HCT116 (cell line): ENCODE measurements at regions of chr17 and their contacts with region 1.

Region 1: GRCh38 chr17:63406689-63407330 is 39.3 kb downstream of the CYB561 start:
- DNase-seq: peak; percentile 93
- ATAC-seq: peak; percentile 96
- H3K4me3 ChIP-seq: no peak overlapping the region
- H3K27ac ChIP-seq: no peak overlapping the region
- H3K4me1 ChIP-seq: no peaks in the 10 kb centered on the region; a peak in 1 of 4 replicates
- H3K27me3 ChIP-seq: no peaks in the 10 kb centered on the region
- CTCF ChIP-seq: peak; percentile 86 to 99 (median 95)
- POLR2A ChIP-seq: no peak
- RAD21 ChIP-seq: peak; percentile 98

Region 2: GRCh38 chr17:62562656-62563055 is 844.2 kb before region 1 on chr17:
- CTCF ChIA-PET with region 1: no interaction called
- POLR2A ChIA-PET with region 1: no interaction called
- RAD21 ChIA-PET with region 1: no interaction called
- intact Hi-C with region 1: loop called (anchors 10 kb)
- DNase-seq: peak; percentile 73
- ATAC-seq: peak; percentile 80
- H3K4me3 ChIP-seq: peak overlapping the region in 1 of 2 experiments; percentile 1; a peak in 1 of 4 replicates
- H3K27ac ChIP-seq: peak overlapping the region; percentile 10; the same call in 1 of the 2 replicates
- H3K4me1 ChIP-seq: peaks cover 23 to 41% of the 10 kb centered on the region in 2 experiments
- H3K27me3 ChIP-seq: no peaks in the 10 kb centered on the region
- CTCF ChIP-seq: no peak
- POLR2A ChIP-seq: no peak
- RAD21 ChIP-seq: no peak

Region 3: GRCh38 chr17:62703775-62704378 is 702.9 kb before region 1 on chr17:
- CTCF ChIA-PET with region 1: interaction called, 13 read pairs
- POLR2A ChIA-PET with region 1: no interaction called
- RAD21 ChIA-PET with region 1: interaction called in 1 of 2 experiments, 3 read pairs
- intact Hi-C with region 1: loop called (anchors 1 kb)
- DNase-seq: no peak
- ATAC-seq: peak; percentile 93
- H3K4me3 ChIP-seq: peak overlapping the region; percentile 48 to 63
- H3K27ac ChIP-seq: peak overlapping the region; percentile 39; the same call in 1 of the 2 replicates
- H3K4me1 ChIP-seq: peaks cover 18 to 32% of the 10 kb centered on the region in 2 experiments
- H3K27me3 ChIP-seq: no peaks in the 10 kb centered on the region
- CTCF ChIP-seq: peak; percentile 76 to 94 (median 91)
- POLR2A ChIP-seq: no peak
- RAD21 ChIP-seq: peak; percentile 97

Region 4: DNA sequence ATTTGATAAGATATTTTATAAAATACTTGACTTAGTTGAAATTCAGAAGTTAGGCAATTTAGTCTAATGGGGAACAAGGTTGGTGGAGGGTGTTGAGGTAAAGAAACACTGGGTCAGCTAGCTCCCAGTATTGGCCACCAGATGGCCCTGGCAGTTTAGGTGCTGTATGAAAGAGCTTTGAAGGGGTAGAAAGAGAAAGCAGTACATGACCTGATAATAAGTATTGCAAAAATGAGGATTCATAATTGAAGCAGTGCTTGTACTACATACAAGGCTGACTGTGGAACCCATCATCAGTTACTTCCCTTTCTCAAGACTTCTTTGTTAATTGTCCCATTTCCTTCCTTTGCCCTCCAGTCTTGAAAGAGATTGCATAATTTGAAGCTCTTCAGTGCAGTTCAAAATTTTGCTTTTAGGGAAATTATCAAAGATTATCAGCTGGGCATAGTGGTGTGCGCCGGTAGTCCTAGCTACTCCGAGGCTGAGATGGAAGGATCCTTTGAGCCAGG is 411.4 kb before region 1 on chr17:
- CTCF ChIA-PET with region 1: interaction called, 48 read pairs
- POLR2A ChIA-PET with region 1: no interaction called
- RAD21 ChIA-PET with region 1: interaction called, 9 to 14 read pairs
- intact Hi-C with region 1: loop called (anchors 1 kb)
- DNase-seq: peak; percentile 38
- ATAC-seq: peak; percentile 97
- H3K4me3 ChIP-seq: no peak overlapping the region
- H3K27ac ChIP-seq: no peak overlapping the region
- H3K4me1 ChIP-seq: peaks cover 0 to 4% of the 10 kb centered on the region in 2 experiments; a peak in 1 of 4 replicates
- H3K27me3 ChIP-seq: no peaks in the 10 kb centered on the region
- CTCF ChIP-seq: peak; percentile 71 to 94 (median 89)
- POLR2A ChIP-seq: no peak
- RAD21 ChIP-seq: peak; percentile 87

Region 5: DNA sequence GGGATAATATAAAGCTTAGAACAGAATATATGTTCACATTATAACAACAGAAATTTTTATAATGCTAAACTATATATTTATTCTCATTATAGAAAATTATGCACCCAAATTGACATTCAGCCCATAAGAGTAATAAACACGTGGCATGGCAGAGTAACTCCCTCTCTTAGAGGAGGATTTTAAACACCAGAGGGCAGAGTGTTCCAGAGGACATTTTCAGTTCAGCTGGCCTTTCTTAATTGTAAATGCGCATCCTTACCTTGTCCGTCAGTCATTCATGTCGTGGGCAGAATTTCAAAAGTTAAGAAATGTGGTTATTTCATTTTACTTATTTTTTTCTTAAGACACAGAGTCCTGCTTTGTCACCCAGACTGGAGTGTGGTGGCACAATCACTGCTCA is 293.6 kb before region 1 on chr17:
- CTCF ChIA-PET with region 1: interaction called, 14 read pairs
- POLR2A ChIA-PET with region 1: no interaction called
- RAD21 ChIA-PET with region 1: interaction called in 1 of 2 experiments, 4 read pairs
- intact Hi-C with region 1: loop called (anchors 1 kb)
- DNase-seq: no peak
- ATAC-seq: peak; percentile 58
- H3K4me3 ChIP-seq: no peak overlapping the region
- H3K27ac ChIP-seq: no peak overlapping the region
- H3K4me1 ChIP-seq: no peaks in the 10 kb centered on the region
- H3K27me3 ChIP-seq: no peaks in the 10 kb centered on the region
- CTCF ChIP-seq: peak; percentile 36 to 47 (median 42); a peak in 5 of 6 replicates
- POLR2A ChIP-seq: no peak
- RAD21 ChIP-seq: peak; percentile 48; the same call in 1 of the 2 replicates

Region 6: DNA sequence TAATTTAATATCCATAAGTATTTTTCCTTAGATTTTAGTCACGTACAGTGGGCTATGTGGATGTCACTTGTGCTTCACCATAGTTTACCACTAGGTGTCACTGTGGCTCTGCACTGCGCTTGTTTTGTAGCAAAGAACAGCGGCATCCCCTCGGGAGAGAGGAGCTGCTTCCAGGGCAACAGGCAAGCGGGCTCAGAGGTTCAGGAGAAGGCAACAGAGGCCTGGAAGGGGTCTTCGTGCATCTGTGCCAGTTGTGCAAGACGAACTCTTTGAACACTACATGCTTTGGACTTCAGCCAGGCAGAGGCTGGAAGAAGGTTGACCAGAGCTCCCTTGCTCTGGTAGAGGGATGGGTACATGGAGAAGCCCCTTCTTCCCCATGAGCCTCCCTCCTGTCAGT is 18.7 kb after region 1 on chr17:
- CTCF ChIA-PET with region 1: interaction called, 12 read pairs
- POLR2A ChIA-PET with region 1: no interaction called
- RAD21 ChIA-PET with region 1: no interaction called
- intact Hi-C with region 1: no loop called
- DNase-seq: peak; percentile 78
- ATAC-seq: peak; percentile 98
- H3K4me3 ChIP-seq: no peak overlapping the region
- H3K27ac ChIP-seq: no peak overlapping the region
- H3K4me1 ChIP-seq: no peaks in the 10 kb centered on the region
- H3K27me3 ChIP-seq: no peaks in the 10 kb centered on the region
- CTCF ChIP-seq: peak; percentile 97 to 99 (median 98)
- POLR2A ChIP-seq: no peak
- RAD21 ChIP-seq: peak; percentile 100